Activated T-helper 2 cell treated with anti-CD3 and anti-CD28 coated beads, Interferon-gamma antibody, Interleukin-2, Interleukin-4, amounts not matched to agents 10 μg/mL and 5 μg/mL and 100 μg/mL, durations not matched to agents 14 hours and 24 hours and 36 hours (primary cell): ENCODE measurements at regions of chr16 and their contacts with region 1.

Region 1: DNA sequence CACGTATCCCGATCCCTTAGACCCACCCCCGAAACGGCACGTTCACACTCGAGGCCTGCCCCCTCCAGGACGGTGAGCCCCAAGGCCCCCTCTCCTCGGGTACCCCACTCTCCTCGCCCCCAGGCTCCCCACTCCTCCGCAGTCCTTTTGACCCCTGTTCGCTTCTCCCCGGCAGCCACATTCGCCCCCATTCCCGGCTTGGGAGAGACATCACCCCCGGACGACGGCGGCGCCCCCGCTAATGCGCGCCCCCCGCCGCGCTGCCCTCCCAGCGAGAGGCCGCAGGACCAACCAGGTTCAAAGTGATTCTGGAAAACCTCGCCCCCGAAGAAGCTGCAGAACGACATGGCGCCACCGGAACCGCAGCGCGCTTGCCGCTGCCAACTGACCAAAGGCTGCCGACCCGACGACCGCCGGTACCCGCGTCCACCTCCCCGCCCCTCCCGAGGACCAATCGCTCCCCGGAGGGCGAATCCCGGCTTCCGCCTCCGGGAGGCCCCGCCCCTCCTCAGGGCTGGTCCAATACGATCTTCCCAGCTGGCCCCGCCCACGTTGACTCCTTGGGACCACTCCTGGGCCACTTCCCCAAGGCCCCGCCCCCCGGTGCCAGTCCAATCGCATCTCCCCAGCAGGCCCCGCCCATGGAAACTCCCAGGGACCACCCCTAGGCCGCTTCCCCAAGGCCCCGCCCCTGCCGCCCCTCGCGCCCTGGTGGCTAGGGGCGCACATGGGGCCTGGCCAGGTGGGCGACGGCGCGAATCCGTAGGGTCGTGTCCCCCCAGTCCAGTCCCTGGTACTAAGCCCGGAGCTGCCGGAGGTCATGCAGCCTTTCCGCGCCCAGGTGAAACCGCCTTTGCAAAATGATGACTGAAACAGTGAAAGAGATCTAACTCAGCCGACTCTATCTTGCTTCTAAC is at the start of gene MSRB1:
- DNase-seq: peak; percentile 99
- H3K4me3 Mint-ChIP-seq: peak within 1 kb of the TSS; percentile 90
- H3K27ac Mint-ChIP-seq: peak within 1 kb of the TSS; percentile 82
- H3K4me1 Mint-ChIP-seq: peaks cover 15% of the 10 kb centered on the region
- H3K27me3 Mint-ChIP-seq: no peaks in the 10 kb centered on the region
- total RNA-seq, gene MSRB1: 33.5 and 35.0 TPM in 2 replicates

Region 2: GRCh38 chr16:1863681-1864460 is 79.2 kb before region 1 on chr16:
- intact Hi-C with region 1: loop called (anchors 5 kb)
- DNase-seq: no peak
- H3K4me3 Mint-ChIP-seq: no peak overlapping the region
- H3K27ac Mint-ChIP-seq: no peak overlapping the region
- H3K4me1 Mint-ChIP-seq: peaks cover 1% of the 10 kb centered on the region
- H3K27me3 Mint-ChIP-seq: peaks cover 16% of the 10 kb centered on the region

Region 3: DNA sequence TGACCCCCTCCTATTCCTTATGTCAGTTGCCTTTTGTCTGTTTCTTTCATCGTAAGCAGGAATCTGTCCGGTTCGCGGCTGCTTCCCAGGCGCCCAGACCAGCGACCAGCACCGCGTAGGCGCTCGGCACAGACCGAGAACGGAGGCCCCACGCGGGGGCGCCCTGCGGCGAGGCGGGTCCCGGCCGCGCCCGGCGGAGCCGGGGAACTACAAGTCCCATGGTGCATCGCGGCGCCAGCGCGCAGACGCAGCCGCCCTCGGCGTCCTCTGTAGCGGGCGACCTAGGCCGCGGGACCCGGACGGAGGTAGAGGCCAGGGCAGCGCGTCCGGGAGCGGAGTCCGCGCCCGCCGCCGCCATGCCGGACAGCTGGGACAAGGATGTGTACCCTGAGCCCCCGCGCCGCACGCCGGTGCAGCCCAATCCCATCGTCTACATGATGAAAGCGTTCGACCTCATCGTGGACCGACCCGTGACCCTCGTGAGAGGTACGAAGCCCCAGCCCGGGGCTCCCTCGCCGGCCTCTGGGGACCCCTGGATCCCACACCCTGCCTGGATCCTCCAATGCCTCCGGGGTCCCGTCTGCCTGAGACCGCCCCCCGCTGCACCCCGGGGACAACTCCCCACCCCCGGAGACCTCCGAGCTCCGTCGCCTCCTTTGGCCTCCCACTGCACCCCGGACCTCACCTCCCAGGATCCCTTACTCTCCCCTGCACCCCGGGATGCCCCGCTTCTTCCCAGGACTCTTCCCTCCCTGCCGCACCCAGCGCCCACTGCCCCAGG is 16.4 kb after region 1 on chr16 and contains the start of gene NDUFB10:
- intact Hi-C with region 1: loop called (anchors 1 kb)
- DNase-seq: peak; percentile 91
- H3K4me3 Mint-ChIP-seq: peak within 1 kb of the TSS; percentile 95
- H3K27ac Mint-ChIP-seq: peak within 1 kb of the TSS; percentile 89
- H3K4me1 Mint-ChIP-seq: peaks cover 26% of the 10 kb centered on the region
- H3K27me3 Mint-ChIP-seq: no peaks in the 10 kb centered on the region
- total RNA-seq, gene NDUFB10: 132 TPM in 2 replicates

Region 4: DNA sequence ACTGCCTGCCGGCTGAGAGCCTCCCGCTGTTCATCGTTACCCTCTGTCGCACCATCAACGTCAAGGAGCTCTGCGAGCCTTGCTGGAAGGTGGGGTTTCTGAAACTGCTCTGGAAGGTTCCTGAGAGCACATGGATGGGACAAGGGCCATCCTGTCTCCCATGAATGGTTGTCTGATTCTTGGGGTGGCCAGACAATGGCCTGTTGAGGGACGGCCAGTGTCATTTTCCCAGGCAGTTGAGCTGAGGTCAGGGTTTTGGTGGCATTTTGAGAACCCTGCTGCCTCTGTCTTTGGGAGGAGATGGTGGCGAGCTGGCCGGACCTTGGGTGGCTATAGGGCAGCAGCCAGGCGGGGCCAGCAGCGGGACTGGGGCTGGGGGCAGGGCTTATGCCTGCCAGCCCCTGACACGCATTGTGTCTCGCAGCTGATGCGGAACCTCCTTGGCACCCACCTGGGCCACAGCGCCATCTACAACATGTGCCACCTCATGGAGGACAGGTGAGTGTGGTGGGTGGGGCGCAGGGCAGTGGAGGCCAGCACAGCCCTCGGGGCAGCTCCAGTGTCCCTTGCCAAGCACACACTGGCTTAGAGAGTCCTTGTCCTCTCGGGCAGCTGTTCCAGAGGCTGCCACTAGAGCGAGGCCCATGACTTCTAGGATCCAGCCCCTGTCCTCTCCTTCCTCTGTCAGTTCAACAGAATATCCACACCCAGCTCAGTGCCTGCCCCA is 113.8 kb after region 1 on chr16:
- intact Hi-C with region 1: no loop called
- DNase-seq: no peak
- H3K4me3 Mint-ChIP-seq: no peak overlapping the region
- H3K27ac Mint-ChIP-seq: no peak overlapping the region
- H3K4me1 Mint-ChIP-seq: no peaks in the 10 kb centered on the region
- H3K27me3 Mint-ChIP-seq: no peaks in the 10 kb centered on the region

Region 5: DNA sequence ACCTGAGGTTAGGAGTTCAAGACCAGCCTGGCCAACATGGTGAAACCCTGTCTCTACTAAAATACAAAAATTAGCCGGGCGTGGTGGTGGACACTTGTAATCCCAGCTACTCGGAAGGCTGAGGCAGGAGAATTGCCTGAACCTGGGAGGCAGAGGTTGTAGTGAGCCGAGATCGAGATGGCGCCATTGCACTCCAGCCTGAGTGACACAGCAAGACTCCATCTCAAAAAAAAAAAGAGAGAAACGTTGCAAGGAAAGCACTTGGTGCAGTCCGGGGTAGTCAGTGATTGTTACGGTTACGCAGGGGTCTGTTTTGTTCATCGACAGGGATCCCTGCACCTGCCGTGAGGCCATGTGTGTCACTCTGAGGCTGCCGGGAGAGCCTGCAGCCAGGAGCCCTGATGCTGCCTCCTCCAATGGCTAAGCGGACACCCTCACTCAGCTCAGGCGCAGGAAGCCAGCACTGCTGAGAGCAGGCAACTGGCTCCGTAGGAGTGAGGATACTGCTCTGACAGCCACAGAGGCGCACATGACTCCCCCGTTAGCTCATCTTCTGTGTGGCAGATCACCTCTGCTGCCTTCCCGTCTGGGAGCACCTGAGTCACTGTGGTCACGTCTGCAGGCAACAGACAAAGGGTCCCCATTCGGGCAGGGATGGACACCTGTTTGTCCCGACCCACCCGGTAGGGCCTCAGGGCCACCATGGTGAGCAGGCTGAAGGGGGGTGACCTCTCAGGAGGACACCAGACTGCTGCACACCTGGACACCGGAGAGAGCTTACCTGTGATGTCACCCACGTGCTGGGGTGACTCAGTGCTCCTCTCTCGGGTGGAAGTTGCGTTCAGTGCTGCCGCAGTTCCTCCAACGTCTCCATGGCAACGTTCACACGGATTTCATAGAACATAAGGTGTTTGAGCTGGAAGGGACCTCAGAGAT is 200.1 kb after region 1 on chr16:
- intact Hi-C with region 1: loop called (anchors 5 kb)
- DNase-seq: no peak
- H3K4me3 Mint-ChIP-seq: no peak overlapping the region
- H3K27ac Mint-ChIP-seq: no peak overlapping the region
- H3K4me1 Mint-ChIP-seq: peaks cover 4% of the 10 kb centered on the region
- H3K27me3 Mint-ChIP-seq: peaks cover 3% of the 10 kb centered on the region